ENCODE measurements at regions of chr17 and their contacts with region 1.

Region 1: GRCh38 chr17:33725675-33726271 is 432.7 kb upstream of the ASIC2 start:
- DNase-seq: peak; percentile 53
- CTCF ChIP-seq: peak; percentile 71

Region 2: GRCh38 chr17:33750943-33751701 is 25.3 kb after region 1 on chr17:
- CTCF ChIA-PET with region 1: interaction called, 51 read pairs
- POLR2A ChIA-PET with region 1: no interaction called
- DNase-seq: peak; percentile 55
- CTCF ChIP-seq: peak; percentile 93

Region 3: GRCh38 chr17:33802349-33803198 is 76.8 kb after region 1 on chr17:
- CTCF ChIA-PET with region 1: no interaction called
- POLR2A ChIA-PET with region 1: no interaction called
- DNase-seq: no peak
- CTCF ChIP-seq: no peak